ENCODE measurements at regions of chr12 and their contacts with region 1.

Region 1: GRCh38 chr12:123050331-123050831 is 69.9 kb downstream of the ARL6IP4 start:
- DNase-seq: peak; percentile 75
- ATAC-seq: peak; percentile 93
- H3K4me3 ChIP-seq: no peak overlapping the region
- H3K27ac ChIP-seq: no peak overlapping the region
- H3K4me1 ChIP-seq: peaks cover 14% of the 10 kb centered on the region
- H3K27me3 ChIP-seq: no peaks in the 10 kb centered on the region
- CTCF ChIP-seq: no peak
- POLR2A ChIP-seq: no peak
- RAD21 ChIP-seq: no peak; the same call in 1 of the 2 replicates

Region 2: GRCh38 chr12:122825773-122826724 is 224.3 kb before region 1 on chr12:
- CTCF ChIA-PET with region 1: no interaction called
- POLR2A ChIA-PET with region 1: no interaction called
- dilution Hi-C with region 1: no loop called
- in situ Hi-C with region 1: no loop called
- intact Hi-C with region 1: no loop called
- DNase-seq: no peak
- ATAC-seq: peak; percentile 78
- H3K4me3 ChIP-seq: peak overlapping the region; percentile 67
- H3K27ac ChIP-seq: no peak overlapping the region
- H3K4me1 ChIP-seq: no peaks in the 10 kb centered on the region
- H3K27me3 ChIP-seq: peaks cover 2% of the 10 kb centered on the region; the same call in 1 of the 2 replicates
- CTCF ChIP-seq: no peak
- POLR2A ChIP-seq: no peak
- RAD21 ChIP-seq: no peak

Region 3: GRCh38 chr12:123085730-123086487 is 35.5 kb after region 1 on chr12:
- CTCF ChIA-PET with region 1: no interaction called
- POLR2A ChIA-PET with region 1: no interaction called
- dilution Hi-C with region 1: no loop called
- in situ Hi-C with region 1: no loop called
- intact Hi-C with region 1: loop called (anchors 5 kb)
- DNase-seq: peak; percentile 32
- ATAC-seq: 0 out of 2 replicates have a peak, but pooled peaks have one; percentile 12
- H3K4me3 ChIP-seq: no peak overlapping the region
- H3K27ac ChIP-seq: no peak overlapping the region
- H3K4me1 ChIP-seq: peaks cover 15% of the 10 kb centered on the region
- H3K27me3 ChIP-seq: no peaks in the 10 kb centered on the region; the same call in 1 of the 2 replicates
- CTCF ChIP-seq: no peak
- POLR2A ChIP-seq: no peak
- RAD21 ChIP-seq: no peak

Region 4: GRCh38 chr12:123141615-123142517 is 91.5 kb after region 1 on chr12:
- CTCF ChIA-PET with region 1: no interaction called
- POLR2A ChIA-PET with region 1: no interaction called
- dilution Hi-C with region 1: no loop called
- in situ Hi-C with region 1: no loop called
- intact Hi-C with region 1: no loop called
- DNase-seq: peak; percentile 84
- ATAC-seq: peak; percentile 88
- H3K4me3 ChIP-seq: no peak overlapping the region
- H3K27ac ChIP-seq: peak overlapping the region; percentile 35
- H3K4me1 ChIP-seq: peaks cover 33% of the 10 kb centered on the region
- H3K27me3 ChIP-seq: no peaks in the 10 kb centered on the region
- CTCF ChIP-seq: no peak
- POLR2A ChIP-seq: no peak
- RAD21 ChIP-seq: no peak; the same call in 1 of the 2 replicates